Motor neuron (in vitro differentiated cells): ENCODE measurements at regions of chr3 and their contacts with region 1.

Region 1: GRCh38 chr3:38528457-38528856 is 32.3 kb downstream of the EXOG start:
- ATAC-seq: peak in 3 of 8 experiments; percentile 65 to 79 (median 70)
- H3K4me3 ChIP-seq: no peak overlapping the region
- H3K27ac ChIP-seq: no peak overlapping the region
- H3K4me1 ChIP-seq: no peaks in the 10 kb centered on the region

Region 2: DNA sequence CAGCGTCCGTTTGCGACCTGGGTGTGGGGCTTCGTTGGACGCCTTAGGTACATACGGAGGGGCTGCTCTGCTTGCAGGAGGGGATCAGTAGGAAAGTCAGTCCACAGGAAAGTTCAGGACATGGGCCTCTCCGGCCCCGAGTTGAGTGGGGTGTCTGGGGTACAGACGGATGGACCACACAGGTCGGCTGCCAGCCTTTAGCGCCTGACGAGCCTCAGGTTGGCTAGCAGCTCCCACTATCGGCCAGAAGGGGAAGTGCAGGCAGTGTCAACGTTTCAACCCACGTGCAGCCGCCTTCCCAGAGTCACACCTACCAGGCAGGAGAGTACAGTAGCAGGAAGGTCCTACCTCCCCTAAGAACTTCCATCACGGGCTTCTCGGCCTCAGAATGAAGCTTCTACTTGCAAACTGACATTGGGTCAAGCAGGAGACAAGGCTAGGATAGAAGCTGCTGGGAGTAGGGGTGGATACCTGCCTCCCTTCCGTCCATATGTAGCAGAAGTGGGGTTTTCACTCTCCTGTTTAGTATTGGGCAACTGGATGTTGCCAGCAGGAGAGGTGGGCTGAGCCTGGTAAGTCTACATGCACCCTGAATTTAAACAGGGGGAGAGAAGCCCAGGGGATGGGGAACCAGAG is 122.8 kb after region 1 on chr3:
- in situ Hi-C with region 1: loop called in 6 of 9 experiments (anchors 10 to 25 kb)
- ATAC-seq: peak in 7 of 8 experiments; percentile 18 to 57 (median 40)
- H3K4me3 ChIP-seq: no peak overlapping the region
- H3K27ac ChIP-seq: no peak overlapping the region
- H3K4me1 ChIP-seq: no peaks in the 10 kb centered on the region

Region 3: DNA sequence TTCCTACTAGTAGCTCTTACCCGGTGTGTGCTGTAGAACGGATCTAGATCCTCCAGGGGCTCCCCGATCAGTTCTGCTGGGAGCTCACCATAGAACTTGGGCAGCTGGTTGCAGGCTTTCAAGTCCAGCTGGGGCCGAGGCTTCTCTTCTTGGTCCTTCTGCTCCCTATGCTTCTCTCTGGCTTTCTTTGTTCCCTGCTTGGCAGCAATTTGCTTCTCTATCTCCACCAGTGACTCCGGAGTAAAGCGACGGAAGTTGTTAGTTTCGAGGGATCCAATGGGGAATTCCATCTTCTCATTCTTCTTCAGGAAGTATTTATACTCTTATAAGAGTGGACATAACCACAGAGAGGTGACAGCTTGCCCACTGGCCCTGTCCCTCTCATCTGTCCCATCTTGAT is 265.3 kb after region 1 on chr3:
- in situ Hi-C with region 1: no loop called
- ATAC-seq: no peak
- H3K4me3 ChIP-seq: no peak overlapping the region
- H3K27ac ChIP-seq: no peak overlapping the region
- H3K4me1 ChIP-seq: no peaks in the 10 kb centered on the region

Region 4: DNA sequence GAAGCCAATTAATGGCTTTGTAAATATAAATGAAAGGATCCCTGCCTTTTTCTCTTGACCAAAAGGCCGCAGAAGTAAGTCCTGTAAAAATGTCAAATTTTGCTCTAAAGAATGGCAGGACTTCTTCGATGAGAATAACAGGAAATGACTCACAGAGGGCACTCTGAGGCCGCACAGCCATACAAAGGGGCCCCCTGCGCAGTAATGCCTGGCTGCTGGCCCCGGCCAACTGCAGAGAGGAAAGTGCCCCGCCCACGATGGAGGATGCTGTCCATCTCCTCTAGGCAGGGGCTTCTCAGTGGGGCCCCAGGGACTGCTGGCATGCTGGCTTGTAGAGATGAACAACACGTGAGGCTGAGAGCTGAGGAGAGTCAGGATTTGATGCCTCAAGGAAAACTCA is 305.7 kb after region 1 on chr3:
- in situ Hi-C with region 1: loop called in 1 of 9 experiments (anchors 25 kb)
- ATAC-seq: peak; percentile 25 to 100 (median 98)
- H3K4me3 ChIP-seq: no peak overlapping the region
- H3K27ac ChIP-seq: no peak overlapping the region
- H3K4me1 ChIP-seq: no peaks in the 10 kb centered on the region

Region 5: GRCh38 chr3:39000008-39000450 is 471.6 kb after region 1 on chr3:
- in situ Hi-C with region 1: loop called in 4 of 9 experiments (anchors 25 kb)
- ATAC-seq: peak in 7 of 8 experiments; percentile 13 to 100 (median 72)
- H3K4me3 ChIP-seq: no peak overlapping the region
- H3K27ac ChIP-seq: no peak overlapping the region
- H3K4me1 ChIP-seq: no peaks in the 10 kb centered on the region